Activated CD8-positive, alpha-beta T cell treated with anti-CD3 and anti-CD28 coated beads for 36 hours (primary cell): ENCODE measurements at regions of chr10 and their contacts with region 1.

Region 1: GRCh38 chr10:31928549-31929260 is at the start of gene ARHGAP12:
- DNase-seq: peak; percentile 76
- ATAC-seq: peak; percentile 54
- H3K4me3 Mint-ChIP-seq: peak within 1 kb of the TSS; percentile 86
- H3K27ac Mint-ChIP-seq: peak within 1 kb of the TSS; percentile 78
- H3K4me1 Mint-ChIP-seq: peaks cover 45% of the 10 kb centered on the region
- H3K27me3 Mint-ChIP-seq: no peaks in the 10 kb centered on the region
- CTCF ChIP-seq: no peak
- total RNA-seq, gene ARHGAP12: 4.0 to 4.3 TPM

Region 2: DNA sequence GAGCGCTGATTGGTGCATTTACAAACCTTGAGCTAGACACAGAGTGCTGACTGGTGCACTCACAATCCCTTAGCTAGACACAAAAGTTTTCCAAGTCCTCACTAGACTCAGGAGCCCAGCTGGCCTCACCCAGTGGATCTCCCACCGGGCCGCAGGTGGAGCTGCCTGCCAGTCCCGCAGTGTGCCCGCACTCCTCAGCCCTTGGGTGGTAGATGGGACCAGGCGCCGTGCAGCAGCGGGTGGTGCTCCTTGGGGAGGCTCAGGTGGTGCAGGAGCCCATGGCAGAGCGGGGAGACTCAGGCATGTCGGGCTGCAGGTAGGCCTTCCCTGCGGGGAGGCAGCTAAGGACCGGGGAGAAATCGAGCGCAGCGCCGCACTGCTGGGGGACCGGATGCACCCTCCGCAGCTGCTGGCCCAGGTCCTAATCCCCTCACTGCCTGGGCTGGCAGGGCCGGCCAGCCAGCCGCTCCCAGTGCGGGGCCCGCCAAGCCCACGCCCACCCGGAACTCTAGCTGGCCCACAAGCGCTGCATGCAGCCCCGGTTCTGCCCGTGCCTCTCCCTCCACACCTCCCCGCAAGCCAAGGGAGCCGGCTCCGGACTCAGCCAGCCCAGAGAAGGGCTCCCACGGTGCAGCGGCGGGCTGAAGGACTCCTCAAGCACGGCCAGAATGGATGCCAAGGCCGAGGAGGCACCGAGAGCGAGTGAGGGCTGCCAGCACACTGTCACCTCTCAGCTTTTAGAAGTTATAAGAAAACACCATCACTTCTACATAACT is 1025.9 kb before region 1 on chr10:
- CTCF ChIA-PET with region 1: no interaction called
- POLR2A ChIA-PET with region 1: no interaction called
- intact Hi-C with region 1: no loop called
- DNase-seq: no peak
- ATAC-seq: no peak
- H3K4me3 Mint-ChIP-seq: no peak overlapping the region
- H3K27ac Mint-ChIP-seq: no peak overlapping the region
- H3K4me1 Mint-ChIP-seq: peaks cover 2% of the 10 kb centered on the region
- H3K27me3 Mint-ChIP-seq: no peaks in the 10 kb centered on the region
- CTCF ChIP-seq: no peak

Region 3: DNA sequence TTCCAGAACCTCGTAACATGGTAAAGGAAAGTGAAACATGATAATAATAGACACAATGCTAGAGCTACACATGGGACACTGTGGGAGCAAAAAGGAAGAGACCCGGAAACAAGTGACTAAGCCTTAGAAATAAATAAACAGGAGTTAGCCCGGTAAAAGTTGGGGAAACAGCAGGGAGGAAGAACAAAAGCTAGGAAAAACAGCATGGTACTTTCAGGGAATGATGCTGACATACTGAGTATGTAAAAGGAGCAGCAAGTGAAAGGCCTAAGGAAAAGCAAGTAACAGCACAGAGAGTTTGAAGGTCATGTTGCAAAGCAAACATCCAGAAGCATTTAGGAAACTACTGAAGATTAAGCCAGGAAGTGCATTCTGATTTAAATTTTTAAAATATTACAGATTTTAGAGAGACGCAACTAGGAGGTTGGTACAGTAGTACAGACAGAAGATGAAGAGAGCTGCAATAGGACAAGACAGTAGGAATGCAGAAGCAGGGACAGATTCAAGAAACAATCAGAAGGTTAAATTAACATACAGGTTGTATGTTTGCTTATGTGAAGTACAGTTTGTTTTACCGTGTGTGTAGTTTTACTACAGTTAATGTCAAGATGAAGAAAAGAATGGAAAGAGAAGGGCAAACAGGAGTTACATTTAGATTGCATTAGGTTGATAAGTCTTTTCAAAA is 63.7 kb before region 1 on chr10:
- CTCF ChIA-PET with region 1: interaction called, 13 read pairs
- POLR2A ChIA-PET with region 1: no interaction called
- intact Hi-C with region 1: no loop called
- DNase-seq: no peak
- ATAC-seq: no peak
- H3K4me3 Mint-ChIP-seq: no peak overlapping the region
- H3K27ac Mint-ChIP-seq: no peak overlapping the region
- H3K4me1 Mint-ChIP-seq: peaks cover 27% of the 10 kb centered on the region
- H3K27me3 Mint-ChIP-seq: no peaks in the 10 kb centered on the region
- CTCF ChIP-seq: no peak

Region 4: DNA sequence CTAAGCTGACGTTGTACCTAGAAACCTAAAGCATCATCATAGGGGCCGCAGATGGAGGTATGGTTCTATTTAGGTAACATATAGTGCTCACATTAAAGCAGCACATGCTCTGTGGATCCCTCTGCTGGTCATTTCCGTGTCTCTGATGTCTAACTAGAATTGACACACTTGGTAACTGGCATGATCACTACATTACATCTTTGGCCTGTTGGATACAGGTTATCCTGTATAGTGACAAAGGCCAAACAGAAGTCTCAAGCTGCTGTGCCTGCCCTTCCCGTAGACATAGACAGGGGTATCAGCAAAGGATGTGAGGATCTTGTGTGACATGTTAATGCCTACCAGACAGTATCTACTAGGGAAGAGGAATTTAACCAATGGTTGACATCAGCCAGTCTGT is 76.3 kb after region 1 on chr10:
- CTCF ChIA-PET with region 1: interaction called, 10 read pairs
- POLR2A ChIA-PET with region 1: no interaction called
- intact Hi-C with region 1: no loop called
- DNase-seq: peak; percentile 63
- ATAC-seq: peak; percentile 75
- H3K4me3 Mint-ChIP-seq: no peak overlapping the region
- H3K27ac Mint-ChIP-seq: no peak overlapping the region
- H3K4me1 Mint-ChIP-seq: peaks cover 9% of the 10 kb centered on the region
- H3K27me3 Mint-ChIP-seq: no peaks in the 10 kb centered on the region
- CTCF ChIP-seq: peak; percentile 54